ENCODE measurements at regions of chr7 and their contacts with region 1.

Region 1: GRCh38 chr7:101058355-101058754 is 26.9 kb upstream of the TRIM56 start:
- DNase-seq: peak; percentile 55
- H3K4me3 ChIP-seq: no peak overlapping the region
- H3K27ac ChIP-seq: no peak overlapping the region
- H3K4me1 ChIP-seq: no peaks in the 10 kb centered on the region
- H3K27me3 ChIP-seq: no peaks in the 10 kb centered on the region
- CTCF ChIP-seq: no peak

Region 2: DNA sequence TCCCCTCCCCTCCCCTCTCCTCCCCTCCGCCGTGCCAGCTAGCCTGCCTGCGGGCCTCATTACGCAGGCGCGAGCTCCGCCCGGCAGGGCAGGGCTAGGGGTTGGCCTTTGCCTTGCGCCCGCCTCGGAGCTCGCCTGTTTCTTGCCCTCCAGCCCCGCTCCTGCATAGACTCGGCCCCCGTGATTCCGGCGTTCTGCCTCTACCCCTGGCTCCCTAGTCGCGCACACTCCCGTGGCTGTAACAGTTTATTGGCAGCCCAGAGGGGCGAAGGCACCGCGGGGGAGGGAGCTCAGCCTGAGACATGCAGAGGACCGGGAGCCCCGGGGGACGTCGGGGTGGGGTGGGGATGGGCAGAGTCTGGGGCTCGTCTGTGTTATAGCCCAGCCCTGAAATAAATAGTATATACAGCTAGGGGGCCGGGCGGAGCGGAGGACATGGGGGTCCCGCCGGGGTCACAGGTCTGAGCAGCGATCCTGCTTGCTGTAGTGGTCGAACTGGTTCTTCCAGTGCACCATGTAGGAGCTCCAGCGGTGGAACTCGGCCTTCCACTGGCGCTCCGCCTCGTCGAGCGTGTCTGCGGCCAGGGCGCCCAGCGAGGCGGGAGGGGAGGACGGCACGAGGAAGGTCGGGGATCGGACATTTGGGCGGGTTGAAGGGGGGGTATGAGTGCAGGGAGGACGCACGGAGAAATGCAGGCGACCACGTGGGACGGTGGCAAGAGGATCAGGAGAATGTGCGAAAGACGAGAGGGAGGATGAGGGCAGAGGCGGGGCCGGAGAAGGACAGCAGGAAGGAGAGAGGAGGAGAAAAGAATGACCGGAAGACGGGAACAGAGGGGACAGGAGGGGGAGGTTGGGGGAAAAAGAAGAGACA is 168.4 kb before region 1 on chr7:
- intact Hi-C with region 1: loop called (anchors 5 kb)
- DNase-seq: peak; percentile 94
- H3K4me3 ChIP-seq: peak overlapping the region; percentile 89
- H3K27ac ChIP-seq: peak overlapping the region; percentile 92
- H3K4me1 ChIP-seq: peaks cover 25% of the 10 kb centered on the region
- H3K27me3 ChIP-seq: peaks cover 4% of the 10 kb centered on the region
- CTCF ChIP-seq: no peak

Region 3: DNA sequence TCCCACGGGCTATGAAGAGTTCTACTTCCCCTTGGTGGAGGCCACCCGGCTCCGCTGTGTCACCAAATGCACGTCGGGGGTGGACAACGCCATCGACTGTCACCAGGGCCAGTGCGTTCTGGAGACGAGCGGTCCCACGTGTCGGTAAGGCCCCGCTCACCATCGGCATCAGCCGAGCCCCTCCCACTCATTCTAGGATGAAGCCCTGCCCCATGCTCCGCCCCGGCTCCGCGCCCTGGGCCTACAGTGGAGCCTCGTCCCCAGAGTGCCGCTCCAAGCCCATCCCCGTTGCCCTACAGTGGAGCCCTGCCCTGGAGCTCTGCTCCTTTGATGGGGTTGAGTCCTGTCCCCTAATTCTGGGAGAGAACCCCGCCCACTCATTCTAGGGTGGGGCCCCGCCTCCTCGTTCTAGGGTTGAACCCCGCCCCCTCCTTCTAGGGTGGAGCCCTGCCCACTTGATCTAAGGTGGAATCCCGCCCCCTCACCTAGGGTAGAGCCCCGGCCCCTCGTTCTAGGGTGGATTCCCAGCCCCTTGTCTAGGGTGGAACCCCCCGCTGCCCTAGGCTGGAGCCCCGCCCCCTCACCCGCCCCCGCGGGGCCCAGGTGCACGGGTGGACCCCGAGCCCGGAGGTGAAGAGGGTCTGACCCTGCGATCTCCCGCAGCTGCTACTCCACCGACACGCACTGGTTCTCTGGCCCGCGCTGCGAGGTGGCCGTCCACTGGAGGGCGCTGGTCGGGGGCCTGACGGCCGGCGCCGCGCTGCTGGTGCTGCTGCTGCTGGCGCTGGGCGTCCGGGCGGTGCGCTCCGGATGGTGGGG is 92.4 kb before region 1 on chr7:
- intact Hi-C with region 1: loop called (anchors 2 kb)
- DNase-seq: peak; percentile 94
- H3K4me3 ChIP-seq: peak overlapping the region; percentile 58
- H3K27ac ChIP-seq: peak overlapping the region; percentile 89
- H3K4me1 ChIP-seq: no peaks in the 10 kb centered on the region
- H3K27me3 ChIP-seq: peaks cover 21% of the 10 kb centered on the region
- CTCF ChIP-seq: peak; percentile 72